Calu3 (cell line): ENCODE measurements at regions of chr1 and their contacts with region 1.

Region 1: GRCh38 chr1:167059045-167059808 is 30.9 kb downstream of the GPA33 start:
- DNase-seq: peak; percentile 83
- H3K4me3 Mint-ChIP-seq: no peak overlapping the region
- H3K27ac Mint-ChIP-seq: no peak overlapping the region
- H3K4me1 Mint-ChIP-seq: peaks cover 17% of the 10 kb centered on the region
- H3K27me3 Mint-ChIP-seq: no peaks in the 10 kb centered on the region
- CTCF ChIP-seq: peak; percentile 93

Region 2: DNA sequence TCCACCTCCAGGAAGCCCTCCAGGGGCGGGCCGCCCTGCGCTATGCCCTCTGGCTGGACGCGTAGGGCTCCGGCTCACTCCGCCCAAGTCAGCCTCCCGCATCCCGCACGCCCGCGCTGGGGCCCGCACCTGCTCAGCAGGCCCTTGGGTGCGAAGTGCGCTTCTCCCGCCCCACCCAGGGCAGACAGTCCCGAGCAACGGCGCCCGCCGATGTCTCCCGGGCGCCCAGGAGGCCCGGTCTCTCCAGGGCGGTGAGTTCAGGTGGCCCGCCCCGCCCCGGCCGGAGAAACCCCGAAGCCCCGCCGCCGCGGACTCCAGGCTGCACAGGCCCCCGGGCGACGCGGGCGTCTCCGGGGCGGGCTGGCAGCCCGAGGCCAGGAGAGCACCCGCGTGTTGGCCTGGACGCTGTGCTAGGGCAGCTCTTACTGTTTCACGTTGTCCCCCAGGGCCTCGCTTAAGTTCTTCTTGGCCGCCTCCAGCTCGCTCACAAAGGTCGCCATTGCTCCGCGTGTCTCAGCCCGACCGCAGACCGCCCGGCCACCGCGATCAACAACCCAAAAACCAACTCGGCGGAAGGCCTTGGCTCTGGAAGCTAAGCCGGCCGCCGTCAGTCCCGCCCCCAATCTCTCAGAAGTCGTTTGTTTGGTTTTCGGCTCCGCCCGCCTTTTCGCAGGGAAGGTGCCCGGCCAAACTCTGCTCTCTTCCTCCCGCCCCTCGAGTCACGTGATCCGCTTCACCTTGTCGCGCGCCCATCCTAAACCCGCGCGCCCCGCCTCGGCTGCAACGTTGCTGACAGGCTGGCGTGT is 183.3 kb before region 1 on chr1 and contains the start of gene TADA1:
- CTCF ChIA-PET with region 1: interaction called, 12 read pairs
- intact Hi-C with region 1: no loop called
- DNase-seq: peak; percentile 99
- H3K4me3 Mint-ChIP-seq: peak within 1 kb of the TSS; percentile 71
- H3K27ac Mint-ChIP-seq: peak within 1 kb of the TSS; percentile 84
- H3K4me1 Mint-ChIP-seq: peaks cover 25% of the 10 kb centered on the region
- H3K27me3 Mint-ChIP-seq: no peaks in the 10 kb centered on the region
- CTCF ChIP-seq: no peak
- total RNA-seq, gene TADA1: 10.8 and 13.1 TPM in 2 replicates

Region 3: GRCh38 chr1:166884040-166884642 is 175.1 kb before region 1 on chr1:
- CTCF ChIA-PET with region 1: interaction called, 17 read pairs
- intact Hi-C with region 1: loop called (anchors 1 kb)
- DNase-seq: peak; percentile 72
- H3K4me3 Mint-ChIP-seq: peak overlapping the region; percentile 56
- H3K27ac Mint-ChIP-seq: no peak overlapping the region
- H3K4me1 Mint-ChIP-seq: peaks cover 10% of the 10 kb centered on the region
- H3K27me3 Mint-ChIP-seq: peaks cover 37% of the 10 kb centered on the region
- CTCF ChIP-seq: peak; percentile 73

Region 4: DNA sequence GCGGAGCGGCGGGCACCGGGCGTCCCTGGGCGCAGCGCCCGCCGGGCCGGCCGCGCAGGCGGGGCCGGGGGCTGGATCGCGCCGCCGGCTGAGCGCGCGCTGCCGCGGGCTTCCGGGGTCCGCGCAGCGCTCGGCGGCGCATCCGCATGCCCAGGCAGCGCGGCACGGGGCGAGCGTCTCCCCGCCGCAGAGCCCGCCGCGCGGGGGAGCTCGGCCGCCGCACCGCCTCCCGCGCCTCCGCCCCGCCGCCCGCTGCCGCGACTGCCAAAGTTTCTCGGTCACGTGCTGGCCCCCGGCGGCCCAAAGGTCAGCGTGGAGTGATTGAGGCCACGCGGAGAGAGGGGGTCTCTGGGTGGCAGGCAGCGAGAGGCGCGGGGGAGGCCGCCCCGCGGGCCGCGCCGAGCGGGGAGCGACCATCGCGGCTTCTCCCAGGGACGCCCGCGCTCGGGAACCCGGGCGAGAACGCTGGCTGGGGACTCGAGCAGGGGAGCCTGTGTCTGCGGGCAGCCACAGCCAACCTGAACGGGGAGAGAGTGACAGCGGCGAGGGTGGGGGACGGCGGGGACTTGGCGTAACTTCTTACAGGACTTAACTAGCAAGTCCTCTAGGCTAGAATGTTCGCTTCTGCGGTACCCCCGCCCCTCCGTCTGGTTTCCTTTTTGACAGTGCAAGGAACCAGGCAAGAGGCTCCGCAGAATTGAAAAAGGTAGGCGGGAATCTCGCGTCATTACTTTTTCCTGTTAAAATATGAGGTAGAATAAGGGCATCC is 83.7 kb before region 1 on chr1 and contains the start of gene ILDR2:
- CTCF ChIA-PET with region 1: interaction called, 6 read pairs
- intact Hi-C with region 1: loop called (anchors 1 kb)
- DNase-seq: peak; percentile 55
- H3K4me3 Mint-ChIP-seq: peak within 1 kb of the TSS; percentile 58
- H3K27ac Mint-ChIP-seq: no peak within 1 kb of the TSS
- H3K4me1 Mint-ChIP-seq: peaks cover 8% of the 10 kb centered on the region
- H3K27me3 Mint-ChIP-seq: peaks cover 77% of the 10 kb centered on the region
- CTCF ChIP-seq: peak; percentile 21
- total RNA-seq, gene ILDR2: 0.91 and 1.9 TPM in 2 replicates

Region 5: DNA sequence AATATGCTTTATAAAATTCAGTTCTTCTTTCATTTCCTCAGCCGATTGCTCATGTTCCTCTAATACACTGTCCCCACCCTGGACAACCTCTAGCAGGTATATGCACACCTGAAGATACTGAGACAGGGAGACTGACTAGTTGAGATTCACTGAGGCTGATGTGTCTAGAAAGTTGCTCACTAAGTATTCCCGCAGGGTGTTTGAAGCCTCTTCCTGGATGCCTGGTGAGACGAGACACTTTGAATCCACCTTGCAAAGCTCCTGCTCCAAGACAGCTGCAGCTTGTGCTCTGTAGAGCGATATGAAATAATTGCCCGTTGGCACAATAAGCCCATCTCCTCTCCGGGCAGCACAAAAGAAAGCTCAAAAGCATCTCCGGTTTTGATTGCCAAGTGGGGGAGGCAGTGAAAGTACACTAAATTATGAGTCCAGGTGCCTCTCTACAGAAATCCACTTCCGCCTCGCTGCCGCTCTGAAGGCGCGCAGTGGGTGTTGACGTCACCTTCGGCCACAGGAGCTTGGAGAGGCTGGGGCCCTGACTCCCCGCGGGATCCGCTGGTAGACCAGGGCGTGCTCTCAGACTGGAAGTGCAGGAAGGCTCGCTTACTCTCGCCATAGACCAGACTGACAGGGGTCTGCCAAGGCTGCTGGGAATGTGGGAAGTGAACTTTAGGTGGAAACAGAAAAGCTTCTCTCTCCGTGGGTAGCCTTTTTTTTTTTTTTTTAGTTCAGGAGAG is 15.3 kb before region 1 on chr1:
- CTCF ChIA-PET with region 1: interaction called, 10 read pairs
- intact Hi-C with region 1: no loop called
- DNase-seq: peak; percentile 85
- H3K4me3 Mint-ChIP-seq: peak overlapping the region; percentile 76
- H3K27ac Mint-ChIP-seq: peak overlapping the region; percentile 50
- H3K4me1 Mint-ChIP-seq: peaks cover 17% of the 10 kb centered on the region
- H3K27me3 Mint-ChIP-seq: no peaks in the 10 kb centered on the region
- CTCF ChIP-seq: no peak

Region 6: GRCh38 chr1:167136191-167136614 is 77.0 kb after region 1 on chr1:
- CTCF ChIA-PET with region 1: no interaction called
- intact Hi-C with region 1: no loop called
- DNase-seq: peak; percentile 38
- H3K4me3 Mint-ChIP-seq: no peak overlapping the region
- H3K27ac Mint-ChIP-seq: no peak overlapping the region
- H3K4me1 Mint-ChIP-seq: peaks cover 18% of the 10 kb centered on the region
- H3K27me3 Mint-ChIP-seq: no peaks in the 10 kb centered on the region
- CTCF ChIP-seq: no peak